ENCODE measurements at regions of chr11 and their contacts with region 1.

Region 1: GRCh38 chr11:87892291-87892690 is 283.0 kb downstream of the RAB38 start:
- DNase-seq: no peak
- H3K4me3 Mint-ChIP-seq: no peak overlapping the region
- H3K27ac Mint-ChIP-seq: no peak overlapping the region
- H3K4me1 Mint-ChIP-seq: peaks cover 24% of the 10 kb centered on the region
- H3K27me3 Mint-ChIP-seq: no peaks in the 10 kb centered on the region
- CTCF ChIP-seq: no peak

Region 2: GRCh38 chr11:88035271-88035670 is 143.0 kb after region 1 on chr11:
- CTCF ChIA-PET with region 1: no interaction called
- intact Hi-C with region 1: no loop called
- DNase-seq: no peak
- H3K4me3 Mint-ChIP-seq: no peak overlapping the region
- H3K27ac Mint-ChIP-seq: no peak overlapping the region
- H3K4me1 Mint-ChIP-seq: no peaks in the 10 kb centered on the region
- H3K27me3 Mint-ChIP-seq: no peaks in the 10 kb centered on the region
- CTCF ChIP-seq: no peak

Region 3: DNA sequence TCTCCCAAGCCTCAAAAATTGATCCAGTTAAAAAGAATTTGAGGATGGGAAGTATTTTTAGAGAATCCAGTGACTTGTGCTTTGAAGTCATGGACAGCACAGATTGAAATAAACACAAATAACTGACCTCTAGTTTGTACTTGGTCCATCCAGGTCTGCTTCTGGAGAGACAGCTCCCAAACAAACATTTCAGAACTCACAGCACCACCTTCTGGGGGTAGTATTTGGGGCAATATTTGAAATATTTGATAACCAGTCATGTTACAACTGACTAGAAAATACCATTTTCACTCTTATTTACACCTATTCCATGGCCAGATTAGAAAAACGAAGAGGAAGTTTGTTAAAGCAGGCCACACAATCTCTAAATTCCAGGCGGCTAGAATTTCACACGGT is 389.0 kb after region 1 on chr11:
- CTCF ChIA-PET with region 1: no interaction called
- intact Hi-C with region 1: loop called (anchors 10 kb)
- DNase-seq: peak; percentile 7
- H3K4me3 Mint-ChIP-seq: no peak overlapping the region
- H3K27ac Mint-ChIP-seq: no peak overlapping the region
- H3K4me1 Mint-ChIP-seq: peaks cover 3% of the 10 kb centered on the region
- H3K27me3 Mint-ChIP-seq: no peaks in the 10 kb centered on the region
- CTCF ChIP-seq: no peak

Measured in Calu3 (cell line).